H1 (cell line): ENCODE measurements at regions of chr7 and their contacts with region 1.

Region 1: DNA sequence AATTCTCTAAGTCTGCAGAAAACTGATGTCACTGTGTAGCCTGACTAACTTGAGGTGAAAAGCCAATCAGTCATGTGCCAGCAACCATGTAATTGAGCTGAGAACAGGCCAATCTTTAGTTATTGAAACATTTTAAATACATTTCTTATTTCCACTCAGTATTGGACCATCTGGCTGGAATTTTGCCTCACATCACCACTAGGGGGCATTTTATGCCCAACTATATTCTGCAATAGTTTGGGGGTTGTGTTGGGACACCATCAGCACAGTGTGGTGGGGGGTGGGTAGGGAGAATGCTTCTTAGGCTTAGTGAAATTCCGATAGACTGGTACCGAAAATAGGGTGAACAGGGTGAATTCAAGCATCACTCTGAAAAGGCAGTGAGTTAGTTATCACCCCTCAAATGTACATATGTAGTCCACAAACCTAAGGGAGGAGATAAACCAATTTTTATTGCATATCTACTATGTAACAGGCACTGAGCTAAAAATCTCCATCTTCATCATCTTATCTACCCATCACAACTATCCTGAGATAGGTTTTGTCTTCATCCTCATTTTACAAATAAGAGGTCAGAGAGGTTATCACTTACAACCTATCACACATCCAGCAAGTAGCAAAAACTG is 17.8 kb downstream of the NPSR1 start:
- DNase-seq: peak in 1 of 2 experiments; percentile 53
- H3K4me3 ChIP-seq: no peak overlapping the region
- H3K27ac ChIP-seq: no peak overlapping the region
- H3K4me1 ChIP-seq: peaks cover 0 to 2% (median 0%) of the 10 kb centered on the region in 4 experiments; a peak in 1 of 7 replicates
- H3K27me3 ChIP-seq: no peaks in the 10 kb centered on the region
- CTCF ChIP-seq: peak; percentile 11 to 69 (median 63)
- EP300 ChIP-seq: no peak
- POLR2A ChIP-seq: no peak
- RAD21 ChIP-seq: peak; percentile 74 to 80

Region 2: DNA sequence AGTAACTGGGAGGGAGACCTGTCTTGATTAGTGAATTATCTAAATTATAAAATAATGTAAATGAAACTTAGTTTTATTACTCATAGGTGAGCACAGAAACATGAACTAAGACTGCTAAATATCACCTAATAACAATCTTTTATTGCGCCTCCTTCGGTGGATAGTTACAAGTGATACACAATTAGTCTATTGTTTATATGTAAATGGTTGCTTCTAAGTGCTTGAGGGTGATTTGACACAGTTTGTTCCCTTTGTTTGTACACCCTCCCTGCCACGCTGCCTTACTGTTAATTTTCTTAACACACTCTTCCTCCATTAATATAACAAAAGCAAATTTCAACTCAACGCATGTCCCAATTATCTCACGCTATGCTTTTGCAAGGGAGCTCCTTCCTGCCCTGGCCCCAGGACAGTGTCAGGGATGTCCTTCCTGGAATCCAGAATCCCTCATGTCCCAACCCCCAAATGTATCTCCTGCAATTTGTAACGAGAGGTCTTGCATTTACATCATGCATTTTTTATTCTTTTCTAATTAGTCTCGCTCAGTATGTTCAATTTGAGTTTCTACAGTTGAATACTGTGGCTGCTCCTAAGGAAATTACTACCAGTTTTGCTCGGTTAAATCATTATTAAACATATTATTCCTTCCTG is 13.7 kb before region 1 on chr7:
- CTCF ChIA-PET with region 1: interaction called, 61 read pairs
- POLR2A ChIA-PET with region 1: interaction called, 3 read pairs
- DNase-seq: no peak
- H3K4me3 ChIP-seq: no peak overlapping the region
- H3K27ac ChIP-seq: no peak overlapping the region
- H3K4me1 ChIP-seq: peaks cover 0 to 14% (median 11%) of the 10 kb centered on the region in 4 experiments; a peak in 5 of 7 replicates
- H3K27me3 ChIP-seq: peaks cover 0 to 11% (median 1%) of the 10 kb centered on the region in 4 experiments; a peak in 2 of 7 replicates
- CTCF ChIP-seq: no peak
- EP300 ChIP-seq: no peak
- POLR2A ChIP-seq: no peak
- RAD21 ChIP-seq: no peak

Region 3: DNA sequence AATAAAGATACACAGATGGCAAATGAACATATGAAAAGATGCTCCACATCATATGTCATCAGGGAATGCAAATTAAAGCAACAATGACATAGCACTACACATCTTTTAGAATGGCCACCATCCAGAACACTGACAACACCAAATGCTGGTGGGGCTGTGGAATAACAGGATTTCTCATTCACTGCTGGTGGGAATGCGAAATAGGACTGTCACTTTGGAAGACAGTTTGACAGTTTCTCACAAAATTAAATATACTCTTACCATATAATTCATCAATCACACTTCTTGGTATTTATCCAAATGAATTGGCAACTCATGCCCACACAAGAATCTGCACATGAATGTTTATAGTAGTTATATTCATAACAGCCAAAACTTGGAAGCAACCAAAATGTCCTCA is 50.4 kb after region 1 on chr7:
- CTCF ChIA-PET with region 1: no interaction called
- POLR2A ChIA-PET with region 1: no interaction called
- DNase-seq: no peak
- H3K4me3 ChIP-seq: no peak overlapping the region
- H3K27ac ChIP-seq: no peak overlapping the region
- H3K4me1 ChIP-seq: peaks cover 0 to 7% (median 0%) of the 10 kb centered on the region in 4 experiments; a peak in 2 of 7 replicates
- H3K27me3 ChIP-seq: no peaks in the 10 kb centered on the region
- CTCF ChIP-seq: no peak
- EP300 ChIP-seq: no peak
- POLR2A ChIP-seq: no peak
- RAD21 ChIP-seq: no peak